MCF 10A (cell line): ENCODE measurements at regions of chr16 and their contacts with region 1.

Region 1: DNA sequence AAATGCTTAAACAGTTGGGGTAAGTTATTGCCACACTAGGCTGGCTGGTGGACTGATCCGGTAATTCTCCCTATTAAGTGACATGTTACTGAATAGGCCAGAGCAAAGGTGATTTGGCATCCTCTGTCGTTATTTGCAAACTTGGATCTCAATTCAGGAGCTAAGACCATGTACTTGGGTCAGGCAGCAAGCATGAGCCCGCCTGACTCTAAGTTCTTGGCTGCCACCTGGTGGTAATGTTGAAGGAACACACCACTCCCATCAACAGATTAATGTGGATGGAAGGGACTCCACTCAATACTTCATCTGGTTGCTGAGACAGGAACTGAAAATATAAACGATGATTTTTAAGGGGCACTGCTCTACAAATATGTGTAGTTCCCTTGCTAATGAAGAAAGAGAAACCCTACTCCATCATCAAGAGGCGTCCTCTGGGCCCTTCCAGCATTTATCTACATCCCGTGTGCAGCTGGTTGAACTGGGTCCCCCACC is 70.8 kb downstream of the EMP2 start:
- DNase-seq: peak; percentile 82
- H3K4me3 Mint-ChIP-seq: no peak overlapping the region
- H3K27ac Mint-ChIP-seq: no peak overlapping the region
- H3K4me1 Mint-ChIP-seq: no peaks in the 10 kb centered on the region
- H3K27me3 Mint-ChIP-seq: no peaks in the 10 kb centered on the region
- CTCF ChIP-seq: peak; percentile 77

Region 2: DNA sequence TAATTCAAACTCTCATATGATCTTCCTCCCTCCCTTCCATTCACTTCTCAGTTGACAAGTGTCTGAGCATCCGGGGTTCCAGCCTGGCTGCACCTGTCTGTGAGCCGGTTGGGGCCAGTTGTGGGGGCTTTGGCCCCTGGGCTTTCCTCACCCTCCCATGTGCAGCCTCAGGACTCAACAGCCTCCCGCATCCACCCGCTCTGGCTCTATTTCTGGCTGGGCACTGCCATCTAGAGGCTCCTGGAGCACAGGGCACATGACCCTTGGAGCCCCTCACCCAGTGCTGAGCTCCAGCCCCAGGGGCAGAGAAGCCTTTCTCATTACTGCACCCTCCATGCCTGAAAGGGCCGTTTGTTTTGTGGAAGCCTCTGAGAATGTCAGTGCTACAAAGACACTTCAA is 1374.8 kb before region 1 on chr16:
- CTCF ChIA-PET with region 1: no interaction called
- POLR2A ChIA-PET with region 1: no interaction called
- intact Hi-C with region 1: loop called (anchors 10 kb)
- DNase-seq: peak; percentile 69
- H3K4me3 Mint-ChIP-seq: no peak overlapping the region
- H3K27ac Mint-ChIP-seq: no peak overlapping the region
- H3K4me1 Mint-ChIP-seq: peaks cover 11% of the 10 kb centered on the region
- H3K27me3 Mint-ChIP-seq: peaks cover 14% of the 10 kb centered on the region
- CTCF ChIP-seq: peak; percentile 76

Region 3: GRCh38 chr16:10256784-10257641 is 252.6 kb before region 1 on chr16:
- CTCF ChIA-PET with region 1: interaction called, 48 read pairs
- POLR2A ChIA-PET with region 1: interaction called, 3 read pairs
- intact Hi-C with region 1: loop called (anchors 1 kb)
- DNase-seq: peak; percentile 46
- H3K4me3 Mint-ChIP-seq: no peak overlapping the region
- H3K27ac Mint-ChIP-seq: no peak overlapping the region
- H3K4me1 Mint-ChIP-seq: peaks cover 11% of the 10 kb centered on the region
- H3K27me3 Mint-ChIP-seq: no peaks in the 10 kb centered on the region
- CTCF ChIP-seq: peak; percentile 81

Region 4: GRCh38 chr16:10314811-10315210 is 194.8 kb before region 1 on chr16:
- CTCF ChIA-PET with region 1: interaction called, 200 read pairs
- POLR2A ChIA-PET with region 1: interaction called, 5 read pairs
- intact Hi-C with region 1: loop called (anchors 1 kb)
- DNase-seq: peak; percentile 25
- H3K4me3 Mint-ChIP-seq: no peak overlapping the region
- H3K27ac Mint-ChIP-seq: no peak overlapping the region
- H3K4me1 Mint-ChIP-seq: no peaks in the 10 kb centered on the region
- H3K27me3 Mint-ChIP-seq: no peaks in the 10 kb centered on the region
- CTCF ChIP-seq: peak; percentile 35

Region 5: DNA sequence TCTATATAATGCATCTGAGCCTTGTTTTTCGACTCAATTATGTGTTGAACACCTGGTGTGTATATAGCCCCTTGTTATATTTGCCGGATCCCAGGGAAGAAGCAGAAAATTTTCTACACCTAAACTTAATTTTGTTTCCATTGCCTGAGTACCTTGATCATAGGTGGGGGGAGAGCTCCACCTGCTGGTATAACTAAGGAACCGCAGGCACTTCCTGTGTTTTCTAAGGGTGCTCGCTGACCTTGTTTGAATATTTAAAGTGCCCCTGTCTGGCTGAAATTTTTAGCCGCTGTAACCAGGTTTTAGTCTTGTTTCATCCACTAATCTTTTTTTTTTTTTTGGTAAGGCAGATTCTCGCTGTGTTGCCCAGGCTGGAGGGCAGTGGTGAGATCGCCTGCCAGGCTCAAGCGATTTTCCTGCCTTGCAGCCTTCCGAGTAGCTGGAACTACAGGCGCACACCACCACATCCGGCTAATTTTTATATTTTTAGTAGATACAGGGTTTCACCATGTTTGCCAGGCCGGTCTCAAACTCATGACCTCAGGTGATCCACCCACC is 227.6 kb after region 1 on chr16:
- CTCF ChIA-PET with region 1: interaction called, 179 read pairs
- POLR2A ChIA-PET with region 1: interaction called, 5 read pairs
- intact Hi-C with region 1: loop called (anchors 1 kb)
- DNase-seq: peak; percentile 80
- H3K4me3 Mint-ChIP-seq: no peak overlapping the region
- H3K27ac Mint-ChIP-seq: no peak overlapping the region
- H3K4me1 Mint-ChIP-seq: no peaks in the 10 kb centered on the region
- H3K27me3 Mint-ChIP-seq: no peaks in the 10 kb centered on the region
- CTCF ChIP-seq: peak; percentile 78

Region 6: GRCh38 chr16:10876799-10877341 is 367.3 kb after region 1 on chr16 and contains the start of gene CIITA:
- CTCF ChIA-PET with region 1: interaction called, 10 read pairs
- POLR2A ChIA-PET with region 1: no interaction called
- intact Hi-C with region 1: no loop called
- DNase-seq: peak; percentile 94
- H3K4me3 Mint-ChIP-seq: no peak within 1 kb of the TSS
- H3K27ac Mint-ChIP-seq: no peak within 1 kb of the TSS
- H3K4me1 Mint-ChIP-seq: peaks cover 13% of the 10 kb centered on the region
- H3K27me3 Mint-ChIP-seq: peaks cover 40% of the 10 kb centered on the region
- CTCF ChIP-seq: no peak
- total RNA-seq, gene CIITA: 0.12 TPM in 1 of 2 replicates, not detected in the other